ENCODE measurements at regions of chr18 and their contacts with region 1.

Region 1: DNA sequence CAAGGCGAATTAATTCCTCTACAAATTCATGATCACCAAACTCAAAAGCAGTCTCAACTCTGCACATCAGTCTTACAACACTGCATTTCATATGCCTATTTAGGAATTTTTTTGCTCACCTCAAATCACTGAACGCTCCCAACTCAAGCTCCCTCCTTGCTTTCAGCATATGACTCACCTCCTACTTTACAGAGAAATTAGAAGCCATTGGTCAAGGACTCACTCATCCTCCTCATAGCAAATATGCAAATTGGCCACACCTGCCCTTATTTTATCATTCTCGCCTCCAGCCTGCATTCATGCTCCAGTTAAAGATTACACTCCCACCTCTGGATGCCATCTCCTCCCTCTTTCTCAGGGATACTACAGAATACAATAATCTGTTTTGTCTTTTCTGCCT is 148.8 kb downstream of the MBD2 start:
- DNase-seq: no peak
- H3K4me3 ChIP-seq: no peak overlapping the region
- H3K27ac ChIP-seq: no peak overlapping the region
- H3K4me1 ChIP-seq: no peaks in the 10 kb centered on the region
- H3K27me3 ChIP-seq: no peaks in the 10 kb centered on the region
- CTCF ChIP-seq: no peak
- POLR2A ChIP-seq: no peak

Region 2: GRCh38 chr18:54112356-54112755 is 36.7 kb after region 1 on chr18:
- intact Hi-C with region 1: loop called in 1 of 2 experiments (anchors 5 kb)
- DNase-seq: no peak
- H3K4me3 ChIP-seq: no peak overlapping the region
- H3K27ac ChIP-seq: no peak overlapping the region
- H3K4me1 ChIP-seq: no peaks in the 10 kb centered on the region
- H3K27me3 ChIP-seq: peaks cover 10% of the 10 kb centered on the region
- CTCF ChIP-seq: no peak
- POLR2A ChIP-seq: no peak

Measured in adrenal gland (tissue), 19 donors.